Heart right ventricle (tissue), 16 donors: ENCODE measurements at regions of chrX and their contacts with region 1.

Region 1: GRCh38 chrX:71532753-71533425 is at the start of gene OGT:
- DNase-seq: peak; percentile 93 to 96
- ATAC-seq: peak; percentile 94 to 97 (median 96)
- H3K4me3 ChIP-seq: peak within 1 kb of the TSS; percentile 63 to 94 (median 77)
- H3K27ac ChIP-seq: peak within 1 kb of the TSS; percentile 82 to 97 (median 90)
- H3K4me1 ChIP-seq: peaks cover 0 to 33% (median 18%) of the 10 kb centered on the region in 9 donors
- H3K27me3 ChIP-seq: peaks cover 0 to 3% (median 0%) of the 10 kb centered on the region in 7 donors
- CTCF ChIP-seq: no peak
- total RNA-seq, gene OGT: 58.8 to 92.1 (median 80.3) TPM

Region 2: DNA sequence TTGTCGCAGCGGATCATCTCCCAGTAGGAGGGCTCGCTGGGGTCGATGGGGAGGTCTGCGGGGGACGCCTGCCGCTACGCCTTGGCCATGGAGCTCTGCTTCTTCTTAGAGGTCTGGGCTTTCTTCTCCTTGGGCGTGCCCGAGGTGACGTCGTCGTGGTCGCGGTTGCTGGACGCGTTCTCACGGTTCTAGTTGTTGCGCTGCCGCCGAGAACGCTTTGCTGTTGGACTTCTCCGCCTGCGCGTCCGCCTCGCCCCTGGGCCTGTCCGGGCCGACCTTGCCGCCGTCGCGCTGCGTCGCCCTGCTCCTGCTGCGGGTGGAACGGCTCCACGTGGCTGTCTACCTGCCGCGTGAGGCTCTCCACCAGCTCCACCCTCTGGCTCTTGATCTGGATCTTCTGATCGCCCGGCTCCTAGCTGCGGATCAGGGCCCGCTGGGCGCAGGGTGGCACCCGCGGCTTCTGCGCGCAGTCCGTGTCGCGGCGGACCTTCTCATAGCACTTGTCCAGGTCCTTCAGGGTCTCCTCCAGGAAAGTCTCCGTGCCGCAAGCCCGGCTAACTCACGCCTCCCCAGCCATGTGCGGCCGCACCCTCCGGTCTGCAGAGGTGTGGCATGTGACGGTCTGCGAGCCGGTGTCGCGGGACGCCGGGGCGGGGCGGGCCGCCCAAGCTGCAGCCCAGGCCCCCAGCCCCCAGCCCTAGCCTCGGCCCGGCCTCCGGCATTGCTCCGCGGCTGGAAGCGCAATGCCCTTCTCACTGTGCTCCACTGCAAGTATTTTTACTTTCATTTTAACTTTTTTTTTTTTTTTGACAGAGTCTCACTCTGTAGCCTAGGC is 40.4 kb before region 1 on chrX:
- intact Hi-C with region 1: loop called in 1 of 10 experiments (anchors 5 kb)
- DNase-seq: peak; percentile 24 to 53
- ATAC-seq: peak in 7 of 8 donors; percentile 69 to 87 (median 83)
- H3K4me3 ChIP-seq: peak overlapping the region in 9 of 10 donors; percentile 29 to 74 (median 65)
- H3K27ac ChIP-seq: peak overlapping the region in 4 of 10 donors; percentile 10 to 63 (median 31)
- H3K4me1 ChIP-seq: no peaks in the 10 kb centered on the region
- H3K27me3 ChIP-seq: no peaks in the 10 kb centered on the region
- CTCF ChIP-seq: no peak

Region 3: DNA sequence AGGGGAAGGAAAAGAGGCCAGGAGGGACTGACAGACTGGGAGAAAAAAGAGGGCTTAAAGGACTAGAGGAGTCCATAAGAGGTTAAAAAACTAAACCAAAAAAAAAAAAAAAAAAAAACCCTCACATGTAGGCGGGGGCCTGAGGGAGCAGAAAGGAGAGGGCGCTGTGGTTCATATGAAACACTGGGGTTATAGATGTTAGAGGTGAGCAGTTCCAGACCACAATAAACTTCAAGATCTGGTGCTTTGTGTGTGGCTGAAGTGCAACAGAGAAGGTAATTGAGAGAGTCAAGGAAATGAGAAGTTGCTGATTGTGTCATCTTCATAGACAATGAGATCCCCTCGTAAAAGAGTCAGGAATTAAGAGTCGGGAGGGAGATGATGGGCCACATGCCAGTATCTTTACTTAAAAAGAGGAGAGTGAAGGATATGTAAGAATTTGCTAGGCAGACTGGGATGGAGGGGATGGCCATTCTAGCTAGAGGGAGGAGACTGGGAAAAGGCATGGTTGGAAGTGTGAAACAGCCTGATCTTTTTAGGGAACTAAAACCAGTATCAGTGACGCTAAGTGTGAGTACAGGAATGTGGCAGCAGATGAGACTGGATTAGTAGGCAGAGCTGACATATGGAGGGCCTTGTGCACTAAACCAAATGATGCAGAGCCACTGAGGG is 18.4 kb before region 1 on chrX:
- intact Hi-C with region 1: loop called in 1 of 10 experiments (anchors 1 kb)
- DNase-seq: no peak
- ATAC-seq: peak in 7 of 8 donors; percentile 25 to 83 (median 59)
- H3K4me3 ChIP-seq: no peak overlapping the region
- H3K27ac ChIP-seq: peak overlapping the region in 8 of 10 donors; percentile 17 to 82 (median 64)
- H3K4me1 ChIP-seq: peaks cover 0 to 7% (median 0%) of the 10 kb centered on the region in 9 donors
- H3K27me3 ChIP-seq: no peaks in the 10 kb centered on the region
- CTCF ChIP-seq: peak in 3 of 9 donors; percentile 6 to 22 (median 18)